ENCODE measurements at regions of chr7 and their contacts with region 1.

Region 1: DNA sequence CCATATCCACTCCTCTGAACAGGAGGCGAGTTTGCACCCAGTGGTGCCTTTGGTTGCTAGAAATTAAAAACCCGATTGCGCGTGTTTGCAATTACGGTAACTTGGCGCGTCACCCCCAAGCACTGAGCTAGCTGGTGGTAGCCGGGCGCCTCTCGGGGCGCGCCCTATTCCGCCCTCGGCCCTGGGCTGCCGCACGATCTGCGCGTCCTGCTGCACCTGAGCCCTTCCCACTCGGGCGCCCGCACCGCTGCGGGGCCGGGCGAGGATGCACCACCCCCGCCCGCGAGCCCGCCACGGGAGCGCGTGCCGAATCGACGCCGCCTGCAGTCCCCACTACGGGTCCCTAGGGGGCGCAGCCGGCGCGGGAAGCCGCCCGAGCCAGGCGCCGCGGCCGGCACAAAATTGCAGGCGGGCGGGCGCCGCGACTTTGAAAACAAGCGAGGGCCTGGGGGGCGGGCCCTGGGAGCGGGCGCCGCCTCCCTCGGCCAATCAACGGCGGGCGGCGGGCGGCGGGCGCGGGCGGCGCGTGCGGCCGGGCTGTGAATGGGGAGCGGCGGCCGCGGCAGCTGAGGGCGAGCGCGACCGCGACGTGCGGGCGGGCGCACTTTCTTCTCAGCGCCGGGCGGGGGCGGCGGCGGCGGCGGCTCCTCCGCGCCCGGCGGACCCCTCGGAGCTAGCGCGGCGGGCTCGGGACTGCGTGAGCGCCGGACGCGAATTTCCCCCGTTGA is at the start of gene SDK1:
- DNase-seq: peak; percentile 88
- H3K4me3 Mint-ChIP-seq: peak within 1 kb of the TSS; percentile 73
- H3K27ac Mint-ChIP-seq: peak within 1 kb of the TSS; percentile 40
- H3K4me1 Mint-ChIP-seq: peaks cover 18% of the 10 kb centered on the region
- H3K27me3 Mint-ChIP-seq: peaks cover 53% of the 10 kb centered on the region
- total RNA-seq, gene SDK1: 0.08 and 0.15 TPM in 2 replicates

Region 2: GRCh38 chr7:2886900-2887299 is 413.9 kb before region 1 on chr7:
- intact Hi-C with region 1: loop called (anchors 2 kb)
- DNase-seq: peak; percentile 30
- H3K4me3 Mint-ChIP-seq: no peak overlapping the region
- H3K27ac Mint-ChIP-seq: no peak overlapping the region
- H3K4me1 Mint-ChIP-seq: peaks cover 5% of the 10 kb centered on the region
- H3K27me3 Mint-ChIP-seq: peaks cover 1% of the 10 kb centered on the region

Region 3: GRCh38 chr7:2894118-2894940 is 406.5 kb before region 1 on chr7:
- intact Hi-C with region 1: loop called (anchors 2 kb)
- DNase-seq: peak; percentile 43
- H3K4me3 Mint-ChIP-seq: peak overlapping the region; percentile 87
- H3K27ac Mint-ChIP-seq: peak overlapping the region; percentile 99
- H3K4me1 Mint-ChIP-seq: peaks cover 37% of the 10 kb centered on the region
- H3K27me3 Mint-ChIP-seq: peaks cover 1% of the 10 kb centered on the region

Region 4: DNA sequence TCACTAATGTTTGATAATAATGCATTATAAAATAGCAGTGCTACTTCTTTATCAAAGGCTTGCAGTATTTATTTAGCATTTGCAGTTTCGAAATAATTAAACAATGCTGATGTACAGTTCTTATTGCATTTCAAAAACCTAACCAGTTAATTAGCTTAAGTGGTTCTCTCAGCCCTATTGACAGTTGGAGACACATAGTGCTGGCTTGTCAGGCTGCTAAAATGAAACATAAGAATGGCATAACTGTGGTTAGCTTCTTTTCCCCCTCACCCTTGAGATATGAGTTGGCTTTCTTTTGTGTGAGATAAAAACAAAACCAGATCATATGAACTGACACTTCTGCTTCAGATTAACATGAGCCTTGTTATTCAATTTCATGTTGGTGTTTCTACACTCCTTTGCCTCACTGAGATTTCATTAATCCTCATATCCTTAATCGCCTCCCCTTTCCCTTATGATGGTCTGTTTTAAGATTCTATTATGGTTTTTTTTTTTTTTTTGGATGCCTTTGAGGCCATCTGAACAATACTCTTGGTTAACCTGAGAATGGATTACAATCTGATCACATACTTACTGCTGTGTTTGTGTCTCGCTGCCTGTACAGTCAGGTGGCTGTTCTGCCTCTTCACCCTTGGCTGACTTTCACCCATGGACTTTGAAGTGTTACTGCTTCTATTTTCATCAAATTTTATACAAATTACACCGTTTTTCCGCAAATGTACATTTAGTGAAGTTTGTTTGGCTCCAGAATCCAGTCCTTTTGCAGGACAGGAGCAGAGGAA is 108.2 kb after region 1 on chr7:
- intact Hi-C with region 1: loop called (anchors 1 kb)
- DNase-seq: no peak
- H3K4me3 Mint-ChIP-seq: no peak overlapping the region
- H3K27ac Mint-ChIP-seq: no peak overlapping the region
- H3K4me1 Mint-ChIP-seq: peaks cover 13% of the 10 kb centered on the region
- H3K27me3 Mint-ChIP-seq: peaks cover 12% of the 10 kb centered on the region

Region 5: DNA sequence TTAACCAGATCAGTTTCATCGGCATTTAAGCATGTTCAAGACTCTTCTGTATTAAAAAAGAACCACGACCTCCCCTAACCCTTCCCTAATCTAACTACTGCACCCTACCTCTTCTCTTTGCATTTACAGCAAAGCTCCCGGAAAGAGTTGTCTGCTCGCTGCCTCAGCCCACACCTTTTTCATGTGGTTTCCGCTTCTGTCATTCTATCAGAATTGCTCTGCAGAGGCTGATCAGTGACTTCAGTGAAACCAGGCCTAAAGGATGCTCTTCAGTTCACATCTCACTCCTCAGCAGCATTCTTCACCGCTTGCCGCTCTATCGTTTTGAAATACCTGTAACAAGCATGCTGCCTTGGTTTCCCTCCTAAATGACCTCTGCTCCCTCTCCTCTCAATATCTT is 161.1 kb after region 1 on chr7:
- intact Hi-C with region 1: loop called (anchors 2 kb)
- DNase-seq: peak; percentile 72
- H3K4me3 Mint-ChIP-seq: peak overlapping the region; percentile 72
- H3K27ac Mint-ChIP-seq: peak overlapping the region; percentile 74
- H3K4me1 Mint-ChIP-seq: peaks cover 32% of the 10 kb centered on the region
- H3K27me3 Mint-ChIP-seq: peaks cover 3% of the 10 kb centered on the region

Region 6: DNA sequence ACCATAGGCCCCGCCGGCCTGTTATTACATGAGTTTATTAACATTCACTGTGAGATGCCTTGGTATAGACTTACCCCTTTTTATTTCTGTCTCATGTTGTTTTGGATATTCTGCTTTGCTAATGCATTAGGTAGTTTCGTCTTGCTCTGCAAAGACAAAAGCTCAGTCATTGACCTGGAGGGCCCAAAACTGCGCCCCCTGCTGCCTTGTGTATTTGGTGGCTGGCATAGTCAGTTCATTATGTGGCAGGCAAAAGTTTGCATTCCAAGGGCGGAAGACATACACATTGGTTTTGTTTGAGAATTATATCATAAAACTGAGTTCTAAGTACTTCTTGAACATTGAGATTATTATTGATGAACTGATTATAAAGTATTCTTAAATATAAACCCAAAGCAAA is 372.7 kb after region 1 on chr7:
- intact Hi-C with region 1: loop called (anchors 1 kb)
- DNase-seq: no peak
- H3K4me3 Mint-ChIP-seq: no peak overlapping the region
- H3K27ac Mint-ChIP-seq: no peak overlapping the region
- H3K4me1 Mint-ChIP-seq: no peaks in the 10 kb centered on the region
- H3K27me3 Mint-ChIP-seq: no peaks in the 10 kb centered on the region

Region 7: DNA sequence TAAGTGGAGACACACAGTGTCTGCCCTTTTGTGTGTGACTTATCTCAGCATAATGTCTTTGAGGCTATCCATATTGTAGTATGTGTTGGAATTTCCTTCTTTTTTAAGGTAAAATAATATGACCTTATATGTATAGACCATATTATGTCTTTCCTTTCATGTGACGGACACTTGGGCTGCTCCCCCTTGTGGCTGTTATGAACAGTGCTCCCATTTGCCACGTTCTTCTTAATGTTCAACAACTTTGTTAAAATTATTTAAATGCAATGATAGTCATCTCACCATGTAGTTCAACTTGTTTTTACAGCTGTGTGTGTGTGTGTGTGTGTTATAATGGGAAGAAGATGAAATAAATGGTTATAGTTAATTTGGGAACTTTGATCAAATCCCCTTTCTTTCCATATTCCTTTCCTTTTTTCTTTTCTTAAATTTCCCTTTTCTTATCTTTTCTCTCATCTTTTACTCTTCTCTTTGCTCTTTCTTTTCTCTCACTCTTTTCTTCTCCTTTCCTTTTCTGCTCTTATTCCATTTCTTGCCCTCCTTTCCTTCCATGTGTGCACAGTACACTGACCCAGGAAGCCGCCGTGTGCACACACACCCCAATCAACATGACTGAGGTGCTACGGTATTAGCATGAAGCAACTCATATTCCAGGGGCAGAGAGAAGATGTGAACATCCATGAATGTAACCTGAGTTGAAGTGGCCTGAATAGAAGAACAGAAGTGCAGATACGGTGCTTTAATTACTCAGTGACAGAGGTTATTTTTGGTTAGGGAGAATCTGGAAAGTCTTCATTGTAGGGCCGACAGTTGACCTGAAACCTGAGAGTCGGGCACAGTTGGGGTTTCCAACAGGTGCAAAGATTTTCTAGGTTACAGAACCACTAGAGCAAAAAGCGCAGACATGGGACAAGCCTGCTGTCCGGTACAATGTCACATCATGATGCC is 596.9 kb after region 1 on chr7:
- intact Hi-C with region 1: loop called (anchors 1 kb)
- DNase-seq: peak; percentile 22
- H3K4me3 Mint-ChIP-seq: no peak overlapping the region
- H3K27ac Mint-ChIP-seq: no peak overlapping the region
- H3K4me1 Mint-ChIP-seq: no peaks in the 10 kb centered on the region
- H3K27me3 Mint-ChIP-seq: peaks cover 14% of the 10 kb centered on the region

Measured in activated T-helper 1 cell treated with anti-CD3 and anti-CD28 coated beads, Interleukin-12 subunit alpha, Interleukin-12 subunit beta, Interleukin-2, Interleukin-4 antibody, amounts not matched to agents 30 ng/mL and 10 ng/mL and 1 ng/mL, durations not matched to agents 14 hours and 24 hours and 36 hours (primary cell).